Lower leg skin (tissue), 4 donors: ENCODE measurements at regions of chr3 and their contacts with region 1.

Region 1: DNA sequence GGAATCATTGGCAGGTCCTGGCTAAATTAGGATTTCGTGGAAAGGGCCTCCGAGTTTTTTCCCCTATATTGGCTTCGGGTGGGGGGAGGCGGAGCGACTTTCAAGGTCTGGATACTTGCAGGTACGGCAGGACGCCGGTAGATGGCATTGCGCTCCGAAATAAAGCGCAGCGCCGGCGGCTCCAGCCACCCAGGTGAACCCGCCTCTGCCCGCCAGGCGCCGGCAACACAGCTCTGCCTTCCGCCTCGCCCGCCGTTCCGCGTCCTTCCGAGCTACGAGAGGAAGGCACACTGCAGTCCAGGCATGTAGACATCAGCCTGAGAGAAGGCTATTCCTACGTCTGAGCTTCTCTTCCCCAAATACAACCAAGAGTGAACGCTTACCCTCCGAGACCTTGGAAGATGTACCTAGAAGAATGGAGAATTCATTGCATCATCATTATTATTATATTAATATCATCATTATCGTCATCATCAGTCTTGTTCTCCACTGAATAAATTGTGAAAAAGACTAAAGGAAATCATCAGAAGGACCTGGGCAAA is 514.1 kb downstream of the MECOM start:
- DNase-seq: peak; percentile 56 to 93
- H3K4me3 ChIP-seq: no peak overlapping the region
- CTCF ChIP-seq: peak in 1 of 3 donors; percentile 77
- POLR2A ChIP-seq: no peak

Region 2: GRCh38 chr3:168865022-168865551 is 284.3 kb before region 1 on chr3:
- intact Hi-C with region 1: no loop called
- DNase-seq: no peak
- H3K4me3 ChIP-seq: no peak overlapping the region
- CTCF ChIP-seq: no peak
- POLR2A ChIP-seq: no peak

Region 3: DNA sequence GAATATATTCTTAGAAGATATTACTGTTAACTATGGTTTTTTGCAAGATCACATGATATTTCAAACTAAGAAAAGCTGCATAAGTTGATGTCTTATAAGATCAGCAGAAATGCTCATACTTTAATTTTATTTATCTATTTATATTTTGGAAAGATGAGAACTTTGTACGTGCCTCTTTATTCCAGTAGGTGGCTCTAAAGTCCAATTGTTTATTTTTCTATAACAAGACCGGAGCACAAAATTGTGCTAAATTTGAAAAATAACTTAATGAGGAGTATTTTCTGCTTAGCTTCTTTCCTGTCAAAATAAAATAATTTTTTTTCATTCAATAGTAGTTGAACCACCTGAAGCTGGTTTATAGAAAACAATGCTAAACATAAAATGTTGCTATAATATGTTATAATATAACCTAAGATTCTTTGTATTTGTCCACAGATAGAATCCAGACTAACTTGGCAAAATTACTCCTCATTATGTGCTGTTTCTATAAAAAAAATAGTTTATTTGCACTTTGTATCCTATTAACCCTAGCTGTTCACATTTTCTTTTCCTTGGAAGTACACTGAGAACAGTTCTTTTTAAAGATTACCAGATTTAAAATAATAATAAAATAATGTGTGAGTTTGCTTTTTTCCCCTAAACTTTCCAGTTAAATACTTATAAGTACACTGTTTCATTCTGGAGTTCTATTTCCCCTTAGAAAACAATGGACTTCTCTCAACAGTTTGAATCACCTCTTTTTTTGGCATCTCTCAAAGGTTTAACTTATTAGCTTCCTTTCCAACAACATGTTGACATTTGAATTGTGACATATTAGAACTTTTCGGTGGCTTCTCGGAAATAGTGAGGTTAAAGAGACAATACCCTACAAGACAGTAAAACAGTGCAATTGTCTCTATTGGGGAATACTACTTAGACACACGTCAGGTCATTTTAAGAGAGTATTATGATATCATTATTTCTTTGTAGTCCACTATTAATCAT is 15.9 kb before region 1 on chr3:
- intact Hi-C with region 1: no loop called
- DNase-seq: no peak
- H3K4me3 ChIP-seq: no peak overlapping the region
- CTCF ChIP-seq: peak in 1 of 3 donors; percentile 9
- POLR2A ChIP-seq: no peak

Region 4: DNA sequence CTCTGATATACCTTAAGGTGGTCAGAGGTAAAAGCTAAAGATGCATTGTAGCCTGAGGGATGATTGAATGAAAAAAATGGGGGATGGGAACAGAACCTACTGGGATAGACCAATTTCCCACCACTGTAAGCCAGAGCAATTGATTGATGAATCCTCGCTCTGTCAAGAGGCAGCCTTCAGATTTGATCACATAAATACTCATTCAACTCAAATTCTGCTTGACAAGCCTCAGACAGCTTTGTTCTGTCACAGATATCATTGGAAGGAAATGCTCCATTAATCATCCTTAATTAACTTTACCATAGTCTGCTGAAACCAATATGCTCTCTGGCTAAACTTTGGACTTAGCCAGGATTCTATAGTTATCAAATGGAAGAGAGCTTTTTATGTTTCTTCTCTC is 46.3 kb after region 1 on chr3:
- intact Hi-C with region 1: no loop called
- DNase-seq: no peak
- H3K4me3 ChIP-seq: no peak overlapping the region
- CTCF ChIP-seq: no peak
- POLR2A ChIP-seq: no peak

Region 5: DNA sequence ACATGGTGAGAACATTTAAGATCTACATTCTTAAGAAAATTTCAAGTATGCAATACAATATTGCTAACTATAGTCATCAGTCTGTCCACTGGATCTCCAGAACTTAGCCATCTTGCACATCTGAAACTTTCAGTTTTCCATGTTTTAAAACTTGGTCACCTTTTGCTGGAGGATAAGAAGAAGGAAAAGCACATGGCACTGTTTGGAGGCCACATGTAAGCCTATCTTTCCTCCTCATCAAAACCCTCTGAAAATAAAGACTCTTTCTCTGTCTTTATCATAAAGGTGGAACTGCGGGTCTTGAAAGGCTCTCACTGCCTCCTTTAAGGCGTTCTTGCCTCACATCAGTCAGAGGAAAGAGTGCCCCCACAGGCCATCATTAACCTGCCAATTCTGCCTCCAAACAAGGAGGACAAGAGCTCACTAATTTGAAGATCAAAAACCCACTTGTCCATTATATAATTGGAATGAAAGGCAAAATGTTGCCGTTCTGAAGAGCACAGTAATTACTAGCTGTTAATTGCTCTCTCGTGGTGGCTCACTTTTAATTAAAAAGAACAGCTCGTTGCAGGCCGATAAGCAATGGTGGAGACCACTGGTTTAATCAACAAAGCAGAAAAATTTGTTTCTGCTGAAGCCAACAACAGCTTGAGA is 356.3 kb after region 1 on chr3:
- intact Hi-C with region 1: no loop called
- DNase-seq: no peak
- H3K4me3 ChIP-seq: no peak overlapping the region
- CTCF ChIP-seq: no peak
- POLR2A ChIP-seq: no peak

Region 6: DNA sequence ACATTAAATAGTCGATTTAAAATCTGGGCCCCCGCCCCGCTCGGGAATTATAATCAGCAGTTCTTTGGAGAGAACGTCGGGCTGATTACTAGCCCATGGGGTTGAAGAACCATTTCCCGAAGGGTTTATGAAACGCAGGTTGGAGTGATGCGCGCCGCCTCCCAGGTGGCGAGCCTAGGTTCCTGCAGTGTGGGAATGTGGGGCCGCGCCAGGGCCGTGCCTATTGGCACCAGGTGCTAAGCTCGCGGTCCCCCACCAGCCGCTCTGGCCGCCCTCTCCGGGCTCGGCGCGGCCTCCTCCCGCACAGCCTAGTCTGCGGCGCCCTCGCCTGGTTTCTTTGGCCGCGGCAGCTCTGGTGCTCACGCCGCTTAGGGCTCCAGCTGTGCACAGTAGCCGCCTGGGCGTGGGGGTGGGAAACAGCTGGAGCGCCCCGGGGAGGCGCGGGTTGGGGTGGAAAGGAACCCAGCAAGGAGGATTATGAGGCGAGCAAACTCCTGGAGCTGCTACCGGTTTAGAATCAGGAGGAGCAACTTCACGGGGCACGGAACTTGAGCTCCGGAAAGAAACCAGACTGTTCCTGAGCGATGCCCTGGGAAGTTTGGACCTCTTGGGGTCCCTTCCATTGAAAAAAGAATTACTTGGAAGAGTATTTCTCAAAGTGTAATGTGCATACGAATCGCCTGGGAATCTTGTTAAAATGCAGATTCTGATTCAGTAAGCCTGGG is 519.7 kb after region 1 on chr3:
- intact Hi-C with region 1: loop called (anchors 5 kb)
- DNase-seq: peak in 1 of 2 donors; percentile 87
- H3K4me3 ChIP-seq: no peak overlapping the region
- CTCF ChIP-seq: no peak
- POLR2A ChIP-seq: no peak